Sigmoid colon (tissue), 7 donors: ENCODE measurements at regions of chr22 and their contacts with region 1.

Region 1: DNA sequence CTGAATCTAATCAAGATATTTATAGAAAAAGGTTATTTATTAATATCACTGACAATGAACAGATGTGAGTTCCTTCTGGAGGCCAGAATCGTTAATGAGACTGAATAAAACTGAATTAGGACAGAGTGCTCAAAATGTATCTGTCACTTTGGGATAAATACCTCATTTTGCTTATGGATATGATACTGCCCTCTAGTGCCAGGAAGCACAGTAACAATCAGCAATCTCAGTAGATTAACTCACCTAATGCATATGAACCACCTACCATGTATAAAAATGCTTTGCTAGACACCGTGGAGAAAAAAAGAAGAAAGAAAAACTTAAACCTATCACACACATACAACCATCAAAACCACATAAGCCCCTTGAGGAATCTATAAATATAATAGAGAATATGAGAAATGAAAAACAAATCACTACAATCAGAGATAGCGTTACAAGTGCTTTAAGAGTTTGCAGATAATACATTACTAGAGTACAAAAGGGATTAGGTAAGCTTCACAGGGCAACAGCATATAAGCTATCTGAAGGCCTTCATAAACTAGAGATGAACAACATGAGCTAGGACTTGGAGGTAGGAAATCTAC is 117.4 kb downstream of the SGSM3 start:
- DNase-seq: no peak
- H3K4me3 ChIP-seq: no peak overlapping the region
- H3K27ac ChIP-seq: peak overlapping the region in 1 of 4 donors; percentile 20
- H3K4me1 ChIP-seq: peaks cover 0 to 53% (median 38%) of the 10 kb centered on the region in 4 donors
- H3K27me3 ChIP-seq: no peaks in the 10 kb centered on the region
- CTCF ChIP-seq: peak in 3 of 4 experiments; percentile 28 to 48 (median 30)
- EP300 ChIP-seq: no peak
- POLR2A ChIP-seq: no peak

Region 2: DNA sequence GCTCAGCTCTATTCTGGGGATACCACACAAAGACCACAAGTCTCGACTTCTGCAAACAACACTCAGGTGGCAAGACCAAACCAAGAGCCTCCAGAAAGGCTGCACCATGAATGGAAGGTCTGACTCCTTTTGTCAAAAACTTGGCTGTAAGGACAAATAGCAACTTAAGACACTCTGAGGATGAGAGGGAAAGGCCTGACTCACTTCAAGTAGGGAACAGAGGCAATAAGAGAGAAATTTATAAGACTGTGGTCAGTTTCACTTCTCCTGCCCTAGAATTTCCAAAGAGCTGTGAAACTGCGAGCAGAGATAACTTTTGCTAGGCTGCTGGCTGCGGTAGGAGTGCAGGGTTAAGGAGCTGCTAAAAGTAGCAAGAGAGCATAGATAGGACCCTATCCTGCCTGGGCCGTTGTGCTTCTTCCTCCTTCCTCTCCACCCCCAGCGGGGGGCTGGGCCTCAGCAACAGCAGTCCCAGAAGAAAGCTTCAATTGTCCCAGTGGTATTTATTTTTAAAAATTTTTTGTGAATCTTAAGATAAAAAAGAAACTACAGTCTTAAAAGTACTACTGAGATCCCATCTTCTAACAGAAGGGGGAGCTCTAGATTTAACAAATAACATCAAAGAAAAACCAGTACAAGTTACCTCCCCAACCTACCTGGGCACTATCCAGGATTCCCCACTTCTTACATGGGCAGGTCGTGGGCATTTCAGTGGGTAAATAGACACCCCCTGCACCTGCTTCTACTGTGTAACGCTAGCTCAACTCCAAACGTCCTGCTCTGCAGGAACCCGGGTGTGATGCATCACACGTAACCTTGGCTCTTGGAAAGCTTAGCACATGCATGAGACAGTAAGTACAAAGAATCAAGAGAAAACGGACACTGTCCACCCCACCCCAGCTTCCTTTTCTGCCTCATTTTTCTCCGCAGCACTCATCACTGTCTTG is 51.0 kb before region 1 on chr22:
- intact Hi-C with region 1: loop called (anchors 5 kb)
- DNase-seq: no peak
- H3K4me3 ChIP-seq: peak overlapping the region in 3 of 4 donors; percentile 4 to 33 (median 9)
- H3K27ac ChIP-seq: peak overlapping the region; percentile 65 to 73 (median 67)
- H3K4me1 ChIP-seq: peaks cover 0 to 36% (median 24%) of the 10 kb centered on the region in 4 donors
- H3K27me3 ChIP-seq: no peaks in the 10 kb centered on the region
- CTCF ChIP-seq: peak; percentile 64 to 77 (median 64)
- EP300 ChIP-seq: no peak
- POLR2A ChIP-seq: no peak